ENCODE measurements at regions of chr17 and their contacts with region 1.

Region 1: GRCh38 chr17:2094891-2095535 is 40.1 kb downstream of the HIC1 start:
- DNase-seq: no peak
- H3K4me3 ChIP-seq: no peak overlapping the region
- H3K27ac ChIP-seq: peak overlapping the region; percentile 1; the same call in 1 of the 2 replicates
- H3K4me1 ChIP-seq: peaks cover 2 to 16% (median 7%) of the 10 kb centered on the region in 4 experiments
- H3K27me3 ChIP-seq: no peaks in the 10 kb centered on the region
- CTCF ChIP-seq: peak; percentile 53 to 64 (median 63)
- EP300 ChIP-seq: no peak
- POLR2A ChIP-seq: no peak
- RAD21 ChIP-seq: peak; percentile 74 to 81

Region 2: DNA sequence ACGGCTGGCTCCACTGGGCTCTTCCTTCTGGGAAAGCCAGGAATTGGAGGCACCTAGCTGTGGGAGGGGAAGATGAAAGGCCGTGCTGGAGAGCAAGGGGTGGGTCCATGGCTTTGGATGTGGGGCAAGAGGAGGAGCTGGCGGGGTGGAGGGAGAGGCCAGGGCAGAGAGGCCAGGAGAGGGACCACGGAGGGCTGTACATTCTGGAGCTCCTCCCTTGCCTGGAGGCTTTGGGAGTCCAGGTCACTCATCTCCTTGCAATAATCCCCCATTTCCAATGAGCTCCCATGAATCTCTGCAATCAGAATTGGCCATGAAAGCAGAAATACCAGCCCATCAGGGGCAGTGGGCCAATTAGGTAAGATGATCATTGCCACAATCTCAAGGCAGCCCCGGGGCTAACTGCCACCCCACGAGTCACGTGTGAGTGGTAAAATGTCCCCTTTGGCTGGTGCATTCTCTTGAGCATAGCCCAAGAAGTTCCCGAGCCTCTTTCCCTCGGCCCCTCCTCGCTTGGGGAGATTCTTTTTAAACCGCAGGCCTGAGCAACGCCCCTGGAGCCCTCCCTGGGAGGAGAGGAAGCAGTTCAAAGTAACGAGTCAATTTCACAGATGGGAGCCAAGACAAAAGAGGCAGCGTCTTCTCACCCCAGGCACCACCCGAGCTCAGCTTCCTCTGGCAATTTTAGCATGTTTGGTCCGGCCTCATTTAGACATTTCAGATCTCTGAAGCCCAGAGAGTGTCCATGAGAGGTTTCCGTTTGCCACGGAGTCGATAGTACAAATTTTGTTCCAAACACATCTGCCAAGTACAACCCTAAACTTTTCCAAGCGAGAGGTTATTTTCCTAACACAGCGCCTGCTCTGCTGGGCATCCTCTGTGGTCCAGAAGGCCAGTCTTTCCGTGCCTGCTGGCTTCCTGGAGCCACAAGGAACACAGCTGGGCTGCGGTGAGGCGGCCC is 83.3 kb before region 1 on chr17:
- CTCF ChIA-PET with region 1: no interaction called
- POLR2A ChIA-PET with region 1: no interaction called
- DNase-seq: no peak
- H3K4me3 ChIP-seq: no peak overlapping the region
- H3K27ac ChIP-seq: no peak overlapping the region
- H3K4me1 ChIP-seq: peaks cover 0 to 13% (median 2%) of the 10 kb centered on the region in 4 experiments; a peak in 2 of 7 replicates
- H3K27me3 ChIP-seq: peaks cover 0 to 7% (median 4%) of the 10 kb centered on the region in 4 experiments; a peak in 3 of 7 replicates
- CTCF ChIP-seq: no peak
- EP300 ChIP-seq: no peak
- POLR2A ChIP-seq: no peak
- RAD21 ChIP-seq: no peak

Region 3: DNA sequence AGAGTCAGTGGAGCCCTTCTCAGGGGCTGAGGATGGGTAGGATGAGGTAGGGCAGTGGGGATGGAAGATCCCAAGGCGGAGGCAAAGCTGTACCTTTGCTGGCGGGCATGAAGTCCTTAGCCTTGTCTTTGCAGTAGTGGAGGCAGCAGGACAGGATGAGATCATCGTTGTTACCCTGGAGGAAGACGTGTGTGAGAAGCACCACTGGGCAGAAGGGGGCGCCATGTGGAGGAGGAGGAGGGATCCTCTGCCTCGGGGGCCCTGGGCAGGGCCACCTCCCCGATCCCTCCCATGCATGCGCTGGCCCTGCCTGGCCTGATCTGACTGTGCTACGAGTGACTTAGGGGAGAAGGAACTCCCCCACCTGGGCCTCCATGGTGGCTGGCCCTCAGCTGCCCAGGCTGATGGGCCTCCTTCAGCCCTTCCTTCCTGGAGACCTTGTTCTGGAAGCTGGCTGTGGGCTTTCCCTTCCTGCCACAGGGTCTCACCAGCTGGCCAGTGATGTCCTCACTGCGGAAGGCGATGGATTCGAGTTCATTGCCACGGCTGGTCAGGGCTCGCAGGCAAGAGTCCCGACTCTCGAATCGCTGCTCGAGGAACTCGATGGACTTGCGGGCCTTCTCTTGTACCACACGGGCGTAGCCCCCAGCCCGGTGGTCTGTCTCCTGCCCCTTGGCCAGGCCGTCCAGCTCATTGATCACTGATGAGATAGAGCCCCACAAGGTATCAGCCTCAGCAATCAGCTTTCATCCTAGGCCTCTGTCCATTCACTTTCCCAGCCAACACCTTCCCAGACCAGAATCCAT is 29.8 kb before region 1 on chr17:
- CTCF ChIA-PET with region 1: interaction called, 17 read pairs
- POLR2A ChIA-PET with region 1: no interaction called
- DNase-seq: peak in 1 of 2 experiments; percentile 89
- H3K4me3 ChIP-seq: no peak overlapping the region
- H3K27ac ChIP-seq: no peak overlapping the region
- H3K4me1 ChIP-seq: peaks cover 0 to 13% (median 9%) of the 10 kb centered on the region in 4 experiments; a peak in 6 of 7 replicates
- H3K27me3 ChIP-seq: peaks cover 0 to 11% (median 5%) of the 10 kb centered on the region in 4 experiments; a peak in 5 of 7 replicates
- CTCF ChIP-seq: peak; percentile 70 to 91 (median 90)
- EP300 ChIP-seq: no peak
- POLR2A ChIP-seq: no peak
- RAD21 ChIP-seq: peak; percentile 71 to 73

Region 4: GRCh38 chr17:2070241-2071023 is 24.6 kb before region 1 on chr17:
- CTCF ChIA-PET with region 1: interaction called, 17 read pairs
- POLR2A ChIA-PET with region 1: no interaction called
- DNase-seq: no peak
- H3K4me3 ChIP-seq: no peak overlapping the region
- H3K27ac ChIP-seq: no peak overlapping the region
- H3K4me1 ChIP-seq: peaks cover under 1 to 14% (median 5%) of the 10 kb centered on the region in 4 experiments; a peak in 6 of 7 replicates
- H3K27me3 ChIP-seq: no peaks in the 10 kb centered on the region
- CTCF ChIP-seq: peak; percentile 26 to 53 (median 44)
- EP300 ChIP-seq: no peak
- POLR2A ChIP-seq: no peak
- RAD21 ChIP-seq: peak; percentile 17 to 42; a peak in 2 of 4 replicates

Region 5: GRCh38 chr17:2075336-2076086 is 19.5 kb before region 1 on chr17:
- CTCF ChIA-PET with region 1: interaction called, 17 read pairs
- POLR2A ChIA-PET with region 1: no interaction called
- DNase-seq: no peak
- H3K4me3 ChIP-seq: no peak overlapping the region
- H3K27ac ChIP-seq: no peak overlapping the region; the same call in 1 of the 2 replicates
- H3K4me1 ChIP-seq: peaks cover 2 to 12% (median 5%) of the 10 kb centered on the region in 4 experiments; a peak in 6 of 7 replicates
- H3K27me3 ChIP-seq: no peaks in the 10 kb centered on the region
- CTCF ChIP-seq: peak in 2 of 3 experiments; percentile 5 to 8; a peak in 1 of 4 replicates
- EP300 ChIP-seq: no peak
- POLR2A ChIP-seq: no peak
- RAD21 ChIP-seq: peak in 1 of 2 experiments; percentile 1; a peak in 1 of 4 replicates

Region 6: DNA sequence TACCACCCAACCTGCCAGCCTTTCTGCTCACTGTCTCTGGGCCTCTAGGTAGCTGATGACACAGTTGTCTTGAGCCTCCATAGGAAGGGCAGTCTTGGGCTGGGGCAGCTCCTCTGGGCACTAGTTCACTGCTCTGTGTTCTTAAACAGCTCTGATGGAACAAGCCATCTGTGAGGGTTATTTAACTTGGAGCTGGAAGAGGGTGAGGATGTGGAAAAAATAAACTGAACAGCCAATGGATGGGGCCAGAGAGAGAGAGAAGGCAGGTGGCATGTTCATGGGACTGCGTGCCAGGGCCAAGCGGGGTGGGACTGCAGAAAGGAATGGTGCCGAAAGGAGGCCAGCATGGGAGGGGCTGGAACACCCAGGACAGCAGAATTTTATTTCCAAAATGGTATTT is 12.5 kb after region 1 on chr17:
- CTCF ChIA-PET with region 1: interaction called, 27 read pairs
- POLR2A ChIA-PET with region 1: no interaction called
- DNase-seq: no peak
- H3K4me3 ChIP-seq: no peak overlapping the region
- H3K27ac ChIP-seq: no peak overlapping the region
- H3K4me1 ChIP-seq: no peaks in the 10 kb centered on the region
- H3K27me3 ChIP-seq: no peaks in the 10 kb centered on the region
- CTCF ChIP-seq: no peak
- EP300 ChIP-seq: no peak
- POLR2A ChIP-seq: no peak
- RAD21 ChIP-seq: no peak

Region 7: DNA sequence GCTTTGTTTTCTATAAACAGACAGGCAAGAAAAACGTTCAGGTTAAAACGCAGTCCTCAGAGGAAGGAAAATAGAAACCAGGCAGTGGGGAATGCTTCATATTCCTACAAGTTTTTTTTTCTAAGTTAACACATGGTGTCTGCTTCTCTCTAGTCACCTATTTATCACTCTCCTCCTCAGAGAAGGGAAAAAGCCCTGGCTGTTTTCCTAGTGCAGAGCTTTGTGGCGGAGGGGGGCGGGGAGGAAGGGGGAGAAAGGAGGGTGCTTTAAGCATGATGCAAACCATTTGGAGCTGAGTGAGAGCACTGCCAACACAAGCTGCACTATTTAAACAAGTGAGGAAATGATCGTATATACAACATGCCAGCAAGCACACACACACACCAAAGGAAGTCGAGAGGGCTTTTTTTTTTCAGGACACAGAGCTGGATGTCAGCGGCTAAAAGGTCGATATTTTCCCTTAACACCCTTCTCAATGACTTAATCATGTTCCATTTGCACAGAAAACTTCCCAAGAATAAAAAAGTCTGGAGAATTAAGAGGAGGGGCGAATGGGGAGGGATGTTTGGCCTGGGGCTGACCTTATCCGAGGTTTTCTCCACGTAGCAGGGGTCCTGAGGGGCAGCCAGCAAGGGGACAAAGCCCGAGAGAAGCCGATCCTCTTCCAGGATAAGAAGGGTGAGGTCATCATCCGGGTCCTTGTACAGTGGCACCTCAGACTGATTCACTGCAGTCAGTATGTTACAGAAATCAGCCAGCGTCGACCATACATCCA is 77.3 kb after region 1 on chr17:
- CTCF ChIA-PET with region 1: interaction called, 27 read pairs
- POLR2A ChIA-PET with region 1: no interaction called
- DNase-seq: no peak
- H3K4me3 ChIP-seq: no peak overlapping the region
- H3K27ac ChIP-seq: no peak overlapping the region
- H3K4me1 ChIP-seq: peaks cover 0 to 4% (median 0%) of the 10 kb centered on the region in 4 experiments; a peak in 2 of 7 replicates
- H3K27me3 ChIP-seq: no peaks in the 10 kb centered on the region
- CTCF ChIP-seq: no peak
- EP300 ChIP-seq: no peak
- POLR2A ChIP-seq: no peak
- RAD21 ChIP-seq: no peak

Region 8: DNA sequence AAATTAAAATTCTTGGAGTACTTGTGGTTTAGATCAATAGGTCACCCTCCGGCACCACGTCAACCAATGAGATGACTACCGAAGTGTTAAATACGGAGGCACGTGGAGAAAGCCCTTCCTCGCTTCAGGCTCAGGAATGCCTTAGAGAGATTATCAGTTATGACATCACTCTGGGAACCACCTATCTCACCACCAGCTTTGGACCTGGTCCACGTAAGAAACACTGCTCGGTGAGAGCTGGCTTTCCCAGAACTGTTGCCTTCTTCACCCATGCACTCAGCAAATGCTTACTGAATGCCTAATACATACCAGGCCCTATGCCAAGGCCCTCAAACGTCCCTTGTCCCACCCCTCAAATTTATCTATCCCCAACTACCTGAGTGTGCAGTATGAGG is 137.2 kb after region 1 on chr17:
- CTCF ChIA-PET with region 1: interaction called, 16 read pairs
- POLR2A ChIA-PET with region 1: no interaction called
- DNase-seq: no peak
- H3K4me3 ChIP-seq: no peak overlapping the region
- H3K27ac ChIP-seq: no peak overlapping the region
- H3K4me1 ChIP-seq: no peaks in the 10 kb centered on the region
- H3K27me3 ChIP-seq: no peaks in the 10 kb centered on the region
- CTCF ChIP-seq: no peak
- EP300 ChIP-seq: no peak
- POLR2A ChIP-seq: no peak
- RAD21 ChIP-seq: no peak